Stomach (tissue), 19 donors: ENCODE measurements at regions of chr4 and their contacts with region 1.

Region 1: DNA sequence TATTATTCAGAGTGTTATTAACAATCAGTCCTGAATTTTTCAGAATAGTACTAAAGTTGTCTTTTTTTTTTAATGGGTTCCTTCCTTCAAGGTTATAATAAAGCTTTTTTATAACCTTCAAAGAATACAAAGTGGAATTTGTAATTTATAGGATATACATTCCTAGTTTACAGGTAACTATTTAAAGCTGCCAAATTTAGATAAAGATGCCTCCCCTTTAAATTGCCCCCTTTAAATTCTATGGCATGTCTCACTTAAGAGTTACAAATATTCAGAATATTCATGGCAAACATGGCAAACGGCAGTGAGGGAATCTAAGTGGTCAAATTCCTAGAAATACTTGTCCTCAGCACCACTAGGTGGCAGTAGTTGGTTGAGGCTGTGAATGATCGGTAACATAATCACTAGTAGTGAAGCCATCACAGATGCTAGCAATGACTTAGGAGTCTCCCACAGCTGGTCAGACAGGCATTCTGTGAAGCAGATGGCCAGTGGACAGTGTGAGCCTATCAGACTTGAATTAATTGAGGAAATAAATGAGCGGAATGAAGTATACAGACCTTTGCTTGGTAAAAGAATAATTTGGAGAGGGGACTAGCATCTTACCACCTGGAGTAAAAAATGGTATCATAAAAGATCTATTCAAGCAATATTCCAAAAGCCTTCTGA is 86.4 kb downstream of the CBR4 start:
- DNase-seq: peak; percentile 55 to 92
- H3K4me3 ChIP-seq: no peak overlapping the region
- H3K27ac ChIP-seq: no peak overlapping the region
- H3K4me1 ChIP-seq: peaks cover 0 to 12% (median 2%) of the 10 kb centered on the region in 4 donors
- H3K27me3 ChIP-seq: no peaks in the 10 kb centered on the region
- CTCF ChIP-seq: peak in 5 of 7 experiments; percentile 53 to 81 (median 66)
- EP300 ChIP-seq: no peak
- POLR2A ChIP-seq: no peak

Region 2: GRCh38 chr4:169492438-169493163 is 568.9 kb after region 1 on chr4:
- intact Hi-C with region 1: loop called (anchors 10 kb)
- DNase-seq: peak; percentile 36 to 44
- H3K4me3 ChIP-seq: no peak overlapping the region
- H3K27ac ChIP-seq: no peak overlapping the region
- H3K4me1 ChIP-seq: no peaks in the 10 kb centered on the region
- H3K27me3 ChIP-seq: no peaks in the 10 kb centered on the region
- CTCF ChIP-seq: peak in 5 of 7 experiments; percentile 38 to 84 (median 59)
- EP300 ChIP-seq: no peak
- POLR2A ChIP-seq: no peak